ENCODE measurements at regions of chr20 and their contacts with region 1.

Region 1: GRCh38 chr20:21601799-21602198 is 87.9 kb upstream of the NKX2-2 start:
- DNase-seq: no peak
- H3K4me3 ChIP-seq: no peak overlapping the region
- H3K27ac ChIP-seq: no peak overlapping the region
- H3K27me3 ChIP-seq: no peaks in the 10 kb centered on the region
- CTCF ChIP-seq: no peak

Region 2: GRCh38 chr20:21615617-21616080 is 13.8 kb after region 1 on chr20:
- CTCF ChIA-PET with region 1: interaction called, 10 read pairs
- POLR2A ChIA-PET with region 1: no interaction called
- DNase-seq: no peak
- H3K4me3 ChIP-seq: no peak overlapping the region
- H3K27ac ChIP-seq: no peak overlapping the region
- H3K27me3 ChIP-seq: no peaks in the 10 kb centered on the region
- CTCF ChIP-seq: peak; percentile 61

Measured in AG04450 (cell line).